ENCODE measurements at regions of chr1 and their contacts with region 1.

Region 1: GRCh38 chr1:108643492-108644335 is 17.2 kb downstream of the HENMT1 start:
- DNase-seq: peak; percentile 62
- H3K4me3 ChIP-seq: no peak overlapping the region
- H3K27ac ChIP-seq: no peak overlapping the region
- H3K27me3 ChIP-seq: no peaks in the 10 kb centered on the region
- CTCF ChIP-seq: peak; percentile 63

Region 2: GRCh38 chr1:108503076-108503740 is 140.5 kb before region 1 on chr1:
- CTCF ChIA-PET with region 1: interaction called, 283 read pairs
- POLR2A ChIA-PET with region 1: no interaction called
- DNase-seq: peak; percentile 6
- H3K4me3 ChIP-seq: no peak overlapping the region
- H3K27ac ChIP-seq: no peak overlapping the region
- H3K27me3 ChIP-seq: no peaks in the 10 kb centered on the region
- CTCF ChIP-seq: no peak

Region 3: GRCh38 chr1:108512239-108512981 is 131.3 kb before region 1 on chr1:
- CTCF ChIA-PET with region 1: interaction called, 283 read pairs
- POLR2A ChIA-PET with region 1: interaction called, 3 read pairs
- DNase-seq: peak; percentile 7
- H3K4me3 ChIP-seq: no peak overlapping the region
- H3K27ac ChIP-seq: no peak overlapping the region
- H3K27me3 ChIP-seq: no peaks in the 10 kb centered on the region
- CTCF ChIP-seq: peak; percentile 89

Region 4: GRCh38 chr1:108627951-108628350 is 15.8 kb before region 1 on chr1:
- CTCF ChIA-PET with region 1: interaction called, 11 read pairs
- POLR2A ChIA-PET with region 1: no interaction called
- DNase-seq: no peak
- H3K4me3 ChIP-seq: no peak overlapping the region
- H3K27ac ChIP-seq: no peak overlapping the region
- H3K27me3 ChIP-seq: no peaks in the 10 kb centered on the region
- CTCF ChIP-seq: no peak

Region 5: DNA sequence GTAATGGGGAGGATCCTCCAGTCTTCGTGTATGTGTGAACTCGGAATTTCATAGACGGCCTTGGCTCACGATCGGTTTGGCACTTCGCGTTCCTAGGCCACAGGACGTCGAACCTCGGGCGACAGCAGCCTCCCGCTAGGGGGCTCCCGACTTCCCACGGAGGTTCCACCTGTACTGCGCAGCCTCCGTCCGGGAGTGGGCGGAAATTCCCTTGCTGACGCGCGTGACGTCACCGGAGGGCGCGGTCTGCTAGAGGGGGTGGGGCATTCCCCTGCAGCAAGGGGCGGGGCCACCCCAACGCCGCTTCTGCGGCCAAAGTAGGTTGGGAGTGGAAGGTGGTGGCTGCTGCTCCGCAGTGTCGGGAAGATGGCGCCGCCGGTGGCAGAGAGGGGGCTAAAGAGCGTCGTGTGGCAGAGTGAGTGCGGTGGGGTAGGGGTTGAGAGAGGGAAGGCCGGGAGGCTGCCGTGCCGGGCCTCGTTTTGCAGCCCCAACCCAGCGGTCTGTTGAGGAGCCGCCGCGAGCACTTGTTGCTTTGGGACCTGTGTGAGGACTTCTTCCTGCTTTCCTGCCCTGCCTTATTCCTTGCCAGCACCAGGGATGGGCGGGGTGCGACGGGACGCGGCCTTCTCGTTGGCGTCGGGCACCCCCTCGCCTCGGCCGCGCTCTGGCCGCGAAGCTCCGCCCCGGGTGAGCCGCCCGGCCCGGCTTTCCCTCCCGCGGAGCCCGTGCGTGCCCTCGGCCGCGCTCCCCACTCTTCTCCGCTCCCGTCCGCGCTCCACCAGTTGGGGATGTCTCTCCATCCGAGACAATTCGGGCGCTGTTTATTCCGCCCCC is 102.9 kb after region 1 on chr1 and contains the start of gene STXBP3:
- CTCF ChIA-PET with region 1: no interaction called
- POLR2A ChIA-PET with region 1: no interaction called
- DNase-seq: peak; percentile 97
- H3K4me3 ChIP-seq: peak within 1 kb of the TSS; percentile 98
- H3K27ac ChIP-seq: peak within 1 kb of the TSS; percentile 97
- H3K27me3 ChIP-seq: no peaks in the 10 kb centered on the region
- CTCF ChIP-seq: peak; percentile 97
- polyA plus RNA-seq, gene STXBP3: 25.5 and 44.0 TPM in 2 replicates

Region 6: DNA sequence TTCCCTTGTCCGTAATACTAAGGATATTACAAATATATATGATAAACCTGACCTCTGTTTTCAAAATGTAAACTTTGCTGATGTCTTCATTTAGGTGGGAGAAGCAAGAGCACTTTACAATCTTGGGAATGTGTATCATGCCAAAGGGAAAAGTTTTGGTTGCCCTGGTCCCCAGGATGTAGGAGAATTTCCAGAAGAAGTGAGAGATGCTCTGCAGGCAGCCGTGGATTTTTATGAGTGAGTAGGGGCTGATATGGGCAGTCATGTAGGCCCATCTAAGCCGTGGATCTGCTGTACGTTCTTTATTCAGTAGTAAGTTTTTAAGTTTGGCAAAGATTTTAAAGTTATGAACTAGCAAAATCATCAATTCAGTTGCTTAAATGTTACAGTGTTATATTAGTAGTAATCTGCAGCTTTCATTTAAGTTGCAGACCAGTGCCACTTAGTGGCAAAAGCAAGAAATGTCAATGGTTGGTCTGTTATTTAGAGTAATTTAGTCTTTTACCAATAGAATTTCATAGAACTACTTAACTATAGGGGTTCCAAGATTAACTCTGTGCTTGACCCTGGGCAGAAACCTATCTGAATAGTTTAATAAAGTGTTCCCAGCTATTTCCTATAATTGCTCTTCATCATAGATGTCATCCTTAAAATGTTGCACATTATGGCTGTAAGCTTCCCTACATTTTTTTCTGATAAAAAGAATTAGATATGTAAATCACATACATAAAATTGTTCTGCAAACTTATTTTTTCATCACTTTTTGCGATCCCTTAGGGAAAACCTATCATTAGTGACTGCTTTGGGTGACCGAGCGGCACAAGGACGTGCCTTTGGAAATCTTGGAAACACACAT is 254.4 kb after region 1 on chr1:
- CTCF ChIA-PET with region 1: interaction called, 29 read pairs
- POLR2A ChIA-PET with region 1: no interaction called
- DNase-seq: peak; percentile 34
- H3K4me3 ChIP-seq: no peak overlapping the region
- H3K27ac ChIP-seq: no peak overlapping the region
- H3K27me3 ChIP-seq: no peaks in the 10 kb centered on the region
- CTCF ChIP-seq: peak; percentile 68